Activated naive CD4-positive, alpha-beta T cell treated with anti-CD3 and anti-CD28 coated beads for 36 hours (primary cell): ENCODE measurements at regions of chr12 and their contacts with region 1.

Region 1: GRCh38 chr12:89225808-89226411 is 126.4 kb downstream of the DUSP6 start:
- DNase-seq: peak; percentile 86
- H3K4me3 Mint-ChIP-seq: peak overlapping the region; percentile 70
- H3K27ac Mint-ChIP-seq: peak overlapping the region; percentile 99
- H3K4me1 Mint-ChIP-seq: peaks cover 70% of the 10 kb centered on the region
- H3K27me3 Mint-ChIP-seq: no peaks in the 10 kb centered on the region

Region 2: GRCh38 chr12:89051065-89051677 is 174.7 kb before region 1 on chr12:
- CTCF ChIA-PET with region 1: no interaction called
- intact Hi-C with region 1: loop called (anchors 1 kb)
- DNase-seq: peak; percentile 37
- H3K4me3 Mint-ChIP-seq: no peak overlapping the region
- H3K27ac Mint-ChIP-seq: no peak overlapping the region
- H3K4me1 Mint-ChIP-seq: peaks cover 10% of the 10 kb centered on the region
- H3K27me3 Mint-ChIP-seq: no peaks in the 10 kb centered on the region

Region 3: DNA sequence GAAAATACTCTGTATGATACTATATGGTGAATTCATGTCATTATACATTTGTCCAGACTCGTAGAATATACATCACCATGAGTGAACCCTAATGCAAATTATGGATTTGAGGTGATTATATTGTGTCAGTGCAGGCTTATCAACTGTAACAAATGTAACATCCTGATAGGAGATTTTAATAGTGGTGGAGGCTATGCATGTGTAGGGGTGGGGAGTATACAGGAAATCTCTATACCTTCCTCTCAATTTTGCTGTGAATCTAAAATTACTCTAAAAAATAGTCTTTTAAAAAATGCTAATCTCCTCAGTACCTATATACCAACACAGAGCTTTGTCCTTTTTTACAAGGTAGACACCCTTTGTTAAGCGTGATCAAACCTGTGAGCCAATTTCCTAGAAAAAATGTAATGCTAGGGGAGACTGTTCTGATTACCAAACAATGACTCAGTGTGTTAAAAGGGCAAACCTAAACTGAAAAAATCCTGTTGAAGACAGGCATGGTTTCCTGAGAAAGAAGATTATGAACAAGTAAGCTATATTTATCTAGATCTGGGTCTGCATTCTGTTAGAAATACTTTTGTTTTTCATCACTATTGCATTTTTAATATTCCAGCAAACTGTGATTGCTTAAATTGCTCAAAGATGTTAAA is 44.5 kb before region 1 on chr12:
- CTCF ChIA-PET with region 1: interaction called, 5 read pairs
- intact Hi-C with region 1: loop called (anchors 1 kb)
- DNase-seq: no peak
- H3K4me3 Mint-ChIP-seq: no peak overlapping the region
- H3K27ac Mint-ChIP-seq: peak overlapping the region; percentile 50
- H3K4me1 Mint-ChIP-seq: peaks cover 22% of the 10 kb centered on the region
- H3K27me3 Mint-ChIP-seq: peaks cover 3% of the 10 kb centered on the region

Region 4: DNA sequence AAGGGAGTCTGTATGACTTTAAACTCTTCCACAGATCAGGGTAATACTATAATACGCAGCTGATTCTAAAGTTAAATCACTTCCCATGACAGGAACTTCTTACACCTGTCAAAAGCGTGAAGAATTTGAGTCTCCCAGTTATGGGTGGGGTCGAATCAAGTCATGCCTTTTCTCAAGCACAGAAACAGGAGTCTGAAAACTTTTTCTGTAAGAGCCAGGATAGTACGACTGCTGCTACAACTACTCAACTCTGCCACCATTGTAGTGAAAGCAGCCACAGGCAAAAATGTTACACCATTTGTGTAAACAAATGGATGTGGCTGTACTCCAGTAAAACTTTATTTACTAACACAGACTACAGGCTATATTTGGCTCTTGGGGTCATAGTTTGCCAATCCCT is 36.1 kb after region 1 on chr12:
- CTCF ChIA-PET with region 1: no interaction called
- intact Hi-C with region 1: loop called (anchors 1 kb)
- DNase-seq: no peak
- H3K4me3 Mint-ChIP-seq: no peak overlapping the region
- H3K27ac Mint-ChIP-seq: no peak overlapping the region
- H3K4me1 Mint-ChIP-seq: peaks cover 24% of the 10 kb centered on the region
- H3K27me3 Mint-ChIP-seq: no peaks in the 10 kb centered on the region

Region 5: DNA sequence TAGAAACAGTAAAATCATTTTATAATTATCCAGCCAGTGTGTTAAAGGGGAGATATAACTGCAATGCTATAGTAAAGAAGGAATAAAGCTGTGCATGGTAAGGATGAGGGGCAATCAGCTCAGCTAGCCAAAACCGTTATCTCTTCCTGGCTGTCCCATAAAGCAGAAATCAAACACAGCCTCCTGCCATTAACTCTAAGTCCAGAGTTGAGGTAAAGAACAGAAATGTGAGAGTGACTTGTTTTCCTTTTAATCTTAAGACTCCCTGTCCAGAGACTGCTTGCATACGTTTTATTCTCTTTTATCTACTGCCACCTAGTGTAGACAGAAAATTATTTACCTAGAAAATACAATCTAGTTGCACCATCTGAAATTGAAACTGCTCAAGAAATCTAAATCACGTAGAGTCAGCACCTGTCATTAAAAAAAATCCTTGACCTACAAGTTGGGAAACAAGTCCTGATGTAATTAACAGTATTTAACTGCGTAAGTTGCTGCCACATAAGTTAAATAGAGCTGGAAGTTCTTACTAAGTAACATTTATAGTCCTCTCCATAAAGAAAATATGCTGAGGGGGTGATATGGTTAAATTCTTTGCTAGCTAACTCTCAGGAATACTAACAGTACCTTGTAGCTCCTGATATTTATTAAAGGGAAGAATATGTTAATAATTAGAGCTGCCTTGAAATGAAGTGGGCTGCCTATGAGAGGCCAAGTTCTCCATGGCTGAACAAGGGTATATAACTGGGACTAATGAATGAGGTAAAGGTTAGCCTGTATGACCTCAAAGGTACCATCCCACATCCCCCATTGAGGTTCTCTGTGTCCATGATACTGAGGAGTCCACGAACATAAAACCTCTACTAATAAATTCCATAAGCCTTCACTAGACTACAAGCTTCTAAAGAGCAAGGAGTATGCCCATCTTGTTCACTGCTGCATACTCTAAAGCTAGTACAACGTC is 236.0 kb after region 1 on chr12:
- CTCF ChIA-PET with region 1: interaction called, 6 read pairs
- intact Hi-C with region 1: loop called (anchors 2 kb)
- DNase-seq: no peak
- H3K4me3 Mint-ChIP-seq: peak overlapping the region; percentile 15
- H3K27ac Mint-ChIP-seq: peak overlapping the region; percentile 48
- H3K4me1 Mint-ChIP-seq: peaks cover 13% of the 10 kb centered on the region
- H3K27me3 Mint-ChIP-seq: no peaks in the 10 kb centered on the region

Region 6: GRCh38 chr12:89862511-89863179 is 636.7 kb after region 1 on chr12:
- CTCF ChIA-PET with region 1: no interaction called
- intact Hi-C with region 1: loop called (anchors 1 kb)
- DNase-seq: peak; percentile 57
- H3K4me3 Mint-ChIP-seq: peak overlapping the region; percentile 70
- H3K27ac Mint-ChIP-seq: peak overlapping the region; percentile 92
- H3K4me1 Mint-ChIP-seq: peaks cover 39% of the 10 kb centered on the region
- H3K27me3 Mint-ChIP-seq: no peaks in the 10 kb centered on the region